ENCODE measurements at regions of chr4 and their contacts with region 1.

Region 1: DNA sequence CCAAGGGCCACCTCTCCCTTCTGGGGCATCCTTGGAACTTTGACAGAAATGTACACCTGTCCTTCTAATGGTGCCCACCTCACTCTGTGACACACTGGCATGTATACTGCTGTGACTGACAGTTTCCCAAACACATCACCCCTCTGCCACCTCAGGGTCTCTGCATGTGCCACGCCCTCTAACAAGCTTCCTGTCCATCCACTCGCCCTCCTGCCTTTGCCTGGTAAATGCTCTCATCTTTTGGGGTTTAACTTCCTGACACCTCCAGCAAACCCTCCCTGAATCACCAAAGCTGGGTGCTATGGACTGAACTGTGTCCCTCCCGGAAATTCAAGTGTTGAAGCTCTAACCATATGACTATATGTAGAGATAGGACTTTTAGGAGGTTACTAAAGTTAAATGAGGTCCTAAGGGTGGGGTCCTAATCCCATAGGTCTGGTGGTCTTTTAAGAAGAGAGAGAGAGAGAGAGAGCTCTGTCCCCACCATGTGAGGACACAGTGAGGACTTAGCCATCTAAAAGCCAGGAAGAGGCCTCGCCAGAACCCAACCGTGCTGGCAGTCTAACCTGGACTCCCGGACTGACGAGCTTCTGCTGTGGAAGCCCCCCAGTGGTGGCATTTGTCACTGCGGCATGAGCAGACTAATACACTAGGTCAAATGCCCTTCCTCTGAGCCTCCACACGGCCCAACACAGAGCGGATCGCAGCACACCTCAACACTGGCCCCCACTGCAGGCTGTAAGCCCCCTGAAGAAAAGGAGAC is 95.6 kb downstream of the AFAP1 start:
- DNase-seq: peak; percentile 60 to 73 (median 64)
- H3K4me3 ChIP-seq: no peak overlapping the region
- H3K27ac ChIP-seq: no peak overlapping the region
- H3K4me1 ChIP-seq: no peaks in the 10 kb centered on the region
- H3K27me3 ChIP-seq: peaks cover 0 to 46% (median 3%) of the 10 kb centered on the region in 5 experiments

Region 2: GRCh38 chr4:7827991-7828720 is 15.9 kb before region 1 on chr4:
- CTCF ChIA-PET with region 1: interaction called, 28 read pairs
- POLR2A ChIA-PET with region 1: interaction called, 4 read pairs
- DNase-seq: peak; percentile 76 to 94 (median 92)
- H3K4me3 ChIP-seq: peak overlapping the region in 2 of 7 experiments; percentile 21 to 31
- H3K27ac ChIP-seq: peak overlapping the region in 1 of 2 experiments; percentile 35
- H3K4me1 ChIP-seq: peaks cover 6 to 26% (median 14%) of the 10 kb centered on the region in 4 experiments
- H3K27me3 ChIP-seq: peaks cover 0 to 25% (median 5%) of the 10 kb centered on the region in 5 experiments